WTC11 (cell line): ENCODE measurements at regions of chr9 and their contacts with region 1.

Region 1: GRCh38 chr9:88753691-88754367 is 218.9 kb downstream of the NXNL2 start:
- DNase-seq: no peak
- ATAC-seq: no peak
- H3K4me3 Mint-ChIP-seq: no peak overlapping the region
- H3K27ac Mint-ChIP-seq: no peak overlapping the region
- H3K4me1 Mint-ChIP-seq: peaks cover 7% of the 10 kb centered on the region
- H3K27me3 Mint-ChIP-seq: no peaks in the 10 kb centered on the region
- CTCF ChIP-seq: no peak

Region 2: DNA sequence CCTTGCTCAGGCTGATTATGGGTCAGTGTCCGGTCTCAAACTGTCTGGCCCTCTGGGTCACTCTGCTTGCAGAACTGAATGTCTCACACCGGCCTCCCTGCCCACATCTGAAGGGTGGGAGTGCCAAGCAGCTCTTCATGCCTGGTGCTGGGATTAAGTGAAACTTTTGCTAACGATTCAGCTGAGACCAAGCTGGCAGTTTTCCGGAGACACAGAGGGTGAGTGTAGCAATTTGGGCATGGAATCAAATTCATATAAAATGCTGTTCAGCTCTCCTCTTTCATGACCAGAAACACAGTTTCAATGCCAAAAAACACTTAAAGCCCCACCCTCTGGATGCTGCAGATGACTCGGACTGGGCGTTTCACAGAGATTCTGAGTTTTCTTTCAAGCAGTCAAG is 11.3 kb before region 1 on chr9:
- CTCF ChIA-PET with region 1: no interaction called
- POLR2A ChIA-PET with region 1: interaction called, 12 read pairs
- DNase-seq: no peak
- ATAC-seq: no peak
- H3K4me3 Mint-ChIP-seq: no peak overlapping the region
- H3K27ac Mint-ChIP-seq: no peak overlapping the region
- H3K4me1 Mint-ChIP-seq: peaks cover 34% of the 10 kb centered on the region
- H3K27me3 Mint-ChIP-seq: no peaks in the 10 kb centered on the region
- CTCF ChIP-seq: no peak